MCF 10A (cell line): ENCODE measurements at regions of chr18 and their contacts with region 1.

Region 1: DNA sequence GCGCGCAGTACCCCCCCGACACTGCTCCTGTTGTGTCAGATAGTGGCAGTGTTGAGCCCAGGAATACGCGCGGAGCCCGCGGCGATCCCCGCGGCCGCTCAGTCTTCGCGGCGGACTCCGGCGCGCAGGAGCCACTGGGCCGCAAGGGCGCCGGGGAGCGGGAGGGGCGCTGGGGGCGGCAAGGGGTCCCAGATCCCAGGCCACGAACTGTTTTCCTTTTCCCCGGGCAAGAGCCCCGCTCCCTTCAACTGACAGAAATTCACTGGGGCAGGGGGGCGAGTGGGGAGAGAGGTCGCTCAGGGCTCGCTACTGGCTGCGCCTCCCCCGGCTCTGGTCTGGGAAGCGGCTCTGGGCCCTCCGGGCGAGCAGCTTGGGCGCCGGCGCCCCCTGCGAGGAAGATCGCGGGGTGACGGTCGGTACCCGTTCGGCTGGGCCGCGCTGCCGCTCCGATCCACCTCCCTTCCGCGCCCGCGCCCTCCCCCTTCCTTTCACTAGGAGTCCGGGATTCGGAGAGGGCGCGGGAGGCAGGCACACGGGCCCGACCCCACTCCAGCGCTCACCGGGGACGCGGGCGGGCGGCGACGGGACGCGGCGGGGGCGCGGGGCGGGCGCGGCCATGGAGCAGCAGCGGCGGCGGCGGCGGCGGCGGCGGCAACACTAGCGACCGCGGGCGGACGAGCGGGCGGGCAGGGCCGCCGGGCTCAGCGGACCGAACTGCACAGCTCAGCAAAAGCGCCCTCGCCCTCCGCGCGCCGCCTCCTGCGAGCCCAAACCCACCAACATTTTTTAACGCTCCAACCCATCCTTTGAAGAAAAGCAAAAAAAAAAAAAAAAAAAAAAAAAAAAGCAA is 1.4 kb upstream of the SETBP1 start:
- DNase-seq: peak; percentile 78
- H3K4me3 Mint-ChIP-seq: peak overlapping the region; percentile 71
- H3K27ac Mint-ChIP-seq: peak overlapping the region; percentile 31
- H3K4me1 Mint-ChIP-seq: no peaks in the 10 kb centered on the region
- H3K27me3 Mint-ChIP-seq: no peaks in the 10 kb centered on the region
- CTCF ChIP-seq: peak; percentile 39

Region 2: DNA sequence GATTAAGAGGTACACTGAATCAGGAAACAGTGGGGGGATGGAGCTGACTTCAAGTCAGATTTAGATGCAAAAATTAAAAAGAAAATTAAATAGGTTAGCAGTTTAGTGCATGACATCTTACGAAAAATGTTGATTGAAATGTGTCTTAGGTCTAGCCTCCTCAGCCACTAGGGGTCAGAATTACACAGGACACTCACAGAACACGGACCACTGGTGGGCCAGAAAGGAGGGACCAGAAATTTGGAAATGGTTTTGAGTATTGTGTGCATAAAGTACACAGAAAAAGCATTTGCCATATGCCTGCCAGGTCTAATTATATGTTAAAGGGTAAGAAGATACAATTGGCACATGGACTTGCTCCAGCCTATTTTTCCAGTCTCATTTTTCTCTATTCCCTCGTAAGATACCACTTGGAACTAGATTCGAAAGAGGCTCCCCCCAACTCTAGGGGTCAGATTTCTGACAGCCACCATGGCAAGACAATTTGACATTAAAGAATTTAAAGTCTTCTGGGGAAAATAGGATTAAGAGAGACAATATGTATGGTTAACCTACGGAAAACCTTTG is 548.8 kb before region 1 on chr18:
- CTCF ChIA-PET with region 1: interaction called, 4 read pairs
- POLR2A ChIA-PET with region 1: no interaction called
- intact Hi-C with region 1: loop called (anchors 1 kb)
- DNase-seq: peak; percentile 61
- H3K4me3 Mint-ChIP-seq: no peak overlapping the region
- H3K27ac Mint-ChIP-seq: no peak overlapping the region
- H3K4me1 Mint-ChIP-seq: peaks cover 6% of the 10 kb centered on the region
- H3K27me3 Mint-ChIP-seq: no peaks in the 10 kb centered on the region
- CTCF ChIP-seq: peak; percentile 78

Region 3: DNA sequence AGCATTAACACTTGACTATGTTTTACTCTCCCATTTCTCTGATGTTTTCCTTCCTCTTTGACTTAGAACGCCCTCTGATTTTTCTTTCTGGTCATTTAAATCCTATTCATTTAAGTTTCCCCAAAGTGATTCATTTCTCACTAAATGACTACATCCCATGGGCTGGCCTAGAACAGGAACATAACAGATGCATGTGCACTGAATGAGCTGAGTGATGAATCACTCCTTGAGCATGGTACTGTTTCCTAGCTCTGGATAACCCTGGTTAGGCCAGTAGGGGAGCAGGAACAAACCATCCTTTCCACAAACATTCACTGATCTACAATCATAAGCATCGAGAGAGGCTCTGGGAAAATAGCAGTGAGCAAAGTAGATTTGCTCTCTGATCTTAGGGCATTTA is 220.5 kb before region 1 on chr18:
- CTCF ChIA-PET with region 1: no interaction called
- POLR2A ChIA-PET with region 1: no interaction called
- intact Hi-C with region 1: loop called (anchors 5 kb)
- DNase-seq: peak; percentile 50
- H3K4me3 Mint-ChIP-seq: no peak overlapping the region
- H3K27ac Mint-ChIP-seq: no peak overlapping the region
- H3K4me1 Mint-ChIP-seq: peaks cover 10% of the 10 kb centered on the region
- H3K27me3 Mint-ChIP-seq: no peaks in the 10 kb centered on the region
- CTCF ChIP-seq: peak; percentile 5

Region 4: DNA sequence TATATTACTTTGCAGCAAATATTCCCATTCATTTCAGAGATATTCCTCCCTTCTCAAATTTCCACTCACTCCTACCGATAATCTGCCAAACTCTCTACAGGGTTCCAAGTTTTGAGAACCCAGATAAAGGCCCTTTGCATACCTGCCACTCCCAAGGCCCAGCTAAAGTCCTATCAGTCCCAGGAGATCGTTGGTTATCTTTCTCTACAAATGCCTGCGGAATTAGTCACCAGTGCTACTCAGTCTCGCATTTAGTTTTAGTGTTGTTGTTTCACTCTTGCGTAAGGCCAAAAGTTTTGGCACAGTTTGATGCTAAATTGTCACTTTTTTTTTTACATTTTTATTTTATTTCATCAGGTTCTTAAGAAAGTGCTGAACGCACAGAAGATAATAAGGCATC is 27.8 kb before region 1 on chr18:
- CTCF ChIA-PET with region 1: no interaction called
- POLR2A ChIA-PET with region 1: no interaction called
- intact Hi-C with region 1: no loop called
- DNase-seq: peak; percentile 73
- H3K4me3 Mint-ChIP-seq: no peak overlapping the region
- H3K27ac Mint-ChIP-seq: no peak overlapping the region
- H3K4me1 Mint-ChIP-seq: peaks cover 22% of the 10 kb centered on the region
- H3K27me3 Mint-ChIP-seq: no peaks in the 10 kb centered on the region
- CTCF ChIP-seq: no peak

Region 5: GRCh38 chr18:44733069-44733753 is 53.9 kb after region 1 on chr18:
- CTCF ChIA-PET with region 1: no interaction called
- POLR2A ChIA-PET with region 1: interaction called, 4 read pairs
- intact Hi-C with region 1: loop called (anchors 10 kb)
- DNase-seq: peak; percentile 83
- H3K4me3 Mint-ChIP-seq: no peak overlapping the region
- H3K27ac Mint-ChIP-seq: peak overlapping the region; percentile 76
- H3K4me1 Mint-ChIP-seq: peaks cover 42% of the 10 kb centered on the region
- H3K27me3 Mint-ChIP-seq: no peaks in the 10 kb centered on the region
- CTCF ChIP-seq: no peak

Region 6: GRCh38 chr18:44895176-44895798 is 216.0 kb after region 1 on chr18:
- CTCF ChIA-PET with region 1: no interaction called
- POLR2A ChIA-PET with region 1: no interaction called
- intact Hi-C with region 1: loop called (anchors 1 kb)
- DNase-seq: peak; percentile 76
- H3K4me3 Mint-ChIP-seq: no peak overlapping the region
- H3K27ac Mint-ChIP-seq: no peak overlapping the region
- H3K4me1 Mint-ChIP-seq: peaks cover 8% of the 10 kb centered on the region
- H3K27me3 Mint-ChIP-seq: no peaks in the 10 kb centered on the region
- CTCF ChIP-seq: peak; percentile 45